ENCODE measurements at regions of chr1 and their contacts with region 1.

Region 1: DNA sequence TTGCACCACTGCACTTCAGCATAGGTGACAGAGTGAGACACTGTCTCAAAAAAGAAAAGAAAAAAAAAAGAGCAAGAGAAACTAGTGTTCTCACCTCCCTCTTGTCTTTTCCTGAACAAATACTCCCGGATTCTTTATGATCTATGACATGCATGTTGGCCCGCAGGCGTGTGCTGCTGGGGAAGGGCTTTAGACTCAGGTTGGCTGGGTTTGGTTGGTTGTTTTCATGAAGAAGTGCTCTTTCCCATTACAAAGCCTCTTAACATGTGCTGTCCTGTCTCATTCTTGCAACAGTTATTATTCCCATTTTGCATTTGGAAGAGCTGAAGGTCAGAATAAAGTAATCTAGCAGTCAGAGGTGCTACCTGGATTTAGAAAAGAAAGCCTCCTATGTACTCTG is 79.5 kb downstream of the TRABD2B start:
- DNase-seq: no peak
- H3K4me3 ChIP-seq: no peak overlapping the region
- H3K27ac ChIP-seq: no peak overlapping the region
- H3K4me1 ChIP-seq: peaks cover 10% of the 10 kb centered on the region
- H3K27me3 ChIP-seq: no peaks in the 10 kb centered on the region
- CTCF ChIP-seq: no peak

Region 2: GRCh38 chr1:47894713-47895537 is 22.8 kb before region 1 on chr1:
- CTCF ChIA-PET with region 1: interaction called, 15 read pairs
- dilution Hi-C with region 1: no loop called
- in situ Hi-C with region 1: no loop called
- intact Hi-C with region 1: no loop called
- DNase-seq: peak; percentile 90
- H3K4me3 ChIP-seq: no peak overlapping the region
- H3K27ac ChIP-seq: peak overlapping the region; percentile 6
- H3K4me1 ChIP-seq: peaks cover 19% of the 10 kb centered on the region
- H3K27me3 ChIP-seq: no peaks in the 10 kb centered on the region
- CTCF ChIP-seq: no peak

Region 3: GRCh38 chr1:48055876-48056764 is 138.4 kb after region 1 on chr1:
- CTCF ChIA-PET with region 1: no interaction called
- dilution Hi-C with region 1: no loop called
- in situ Hi-C with region 1: no loop called
- intact Hi-C with region 1: no loop called
- DNase-seq: no peak
- H3K4me3 ChIP-seq: no peak overlapping the region
- H3K27ac ChIP-seq: no peak overlapping the region
- H3K4me1 ChIP-seq: peaks cover 33% of the 10 kb centered on the region
- H3K27me3 ChIP-seq: no peaks in the 10 kb centered on the region
- CTCF ChIP-seq: no peak